Endothelial cell of umbilical vein (primary cell): ENCODE measurements at regions of chr12 and their contacts with region 1.

Region 1: DNA sequence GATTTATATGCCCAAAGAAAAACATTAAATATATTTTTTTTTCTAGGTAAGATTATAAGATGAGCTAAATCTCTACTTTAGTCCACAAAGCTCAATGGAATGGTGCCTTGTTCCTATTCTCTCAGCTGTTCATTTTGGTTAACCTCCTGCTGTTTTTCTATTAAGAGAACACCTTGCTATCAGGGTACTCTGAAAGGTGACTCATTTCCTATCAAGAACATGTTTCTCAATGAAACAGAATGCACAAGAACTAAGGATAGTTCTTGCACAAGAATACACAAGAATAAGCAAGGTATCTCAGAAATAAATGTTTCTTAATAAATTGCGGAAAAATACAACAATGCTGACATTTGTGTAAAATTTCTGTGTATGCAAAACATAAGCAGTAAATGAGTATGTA is 14.1 kb downstream of the ABCD2 start:
- DNase-seq: no peak
- H3K4me3 ChIP-seq: no peak overlapping the region
- H3K27ac ChIP-seq: no peak overlapping the region
- H3K4me1 ChIP-seq: peaks cover 5% of the 10 kb centered on the region
- H3K27me3 ChIP-seq: no peaks in the 10 kb centered on the region
- CTCF ChIP-seq: no peak
- POLR2A ChIP-seq: no peak

Region 2: GRCh38 chr12:39574785-39575492 is 30.6 kb before region 1 on chr12:
- CTCF ChIA-PET with region 1: no interaction called
- POLR2A ChIA-PET with region 1: no interaction called
- dilution Hi-C with region 1: no loop called
- intact Hi-C with region 1: no loop called
- DNase-seq: no peak
- H3K4me3 ChIP-seq: no peak overlapping the region
- H3K27ac ChIP-seq: no peak overlapping the region
- H3K4me1 ChIP-seq: no peaks in the 10 kb centered on the region
- H3K27me3 ChIP-seq: no peaks in the 10 kb centered on the region
- CTCF ChIP-seq: no peak
- POLR2A ChIP-seq: no peak

Region 3: DNA sequence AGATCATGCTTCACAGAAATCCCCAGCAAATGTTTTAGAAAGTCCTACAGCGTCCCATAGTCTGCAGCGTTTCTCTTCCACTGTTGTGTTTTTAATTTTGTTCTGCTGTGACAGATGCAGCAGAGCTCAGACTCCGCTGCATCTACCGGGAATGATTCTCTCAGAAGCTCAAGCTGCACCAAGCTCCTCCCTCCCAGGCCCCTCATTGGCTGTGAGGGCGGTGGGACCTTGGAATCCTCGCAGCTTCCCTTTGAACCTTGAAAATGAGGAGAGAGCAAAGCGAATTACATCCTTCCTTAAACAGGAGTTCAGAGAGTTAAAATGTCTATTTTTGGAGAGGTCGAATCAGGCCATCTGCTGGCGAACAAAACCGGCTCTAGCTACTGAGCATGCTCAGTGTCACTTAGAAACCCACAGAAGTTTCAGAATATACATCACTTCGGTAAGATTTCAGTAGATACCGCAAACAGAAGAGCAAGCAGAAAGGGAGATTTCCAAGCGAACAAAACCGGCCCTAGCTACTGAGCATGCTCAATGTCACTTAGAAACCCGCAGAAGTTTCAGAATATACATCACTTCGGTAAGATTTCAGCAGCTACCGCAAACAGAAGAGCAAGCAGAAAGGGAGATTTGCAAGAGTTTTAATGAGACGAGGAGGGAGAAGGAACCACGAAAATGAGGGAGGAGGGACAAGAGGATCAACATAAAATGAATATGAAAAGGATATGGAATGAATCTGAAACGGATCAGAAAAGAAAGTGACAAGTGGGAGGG is 14.3 kb after region 1 on chr12 and contains the start of gene ABCD2:
- CTCF ChIA-PET with region 1: interaction called, 15 read pairs
- POLR2A ChIA-PET with region 1: no interaction called
- dilution Hi-C with region 1: no loop called
- intact Hi-C with region 1: no loop called
- DNase-seq: peak; percentile 76
- H3K4me3 ChIP-seq: peak within 1 kb of the TSS; percentile 38 to 58 (median 40)
- H3K27ac ChIP-seq: no peak within 1 kb of the TSS
- H3K4me1 ChIP-seq: peaks cover 3% of the 10 kb centered on the region
- H3K27me3 ChIP-seq: peaks cover 10 to 15% of the 10 kb centered on the region in 2 experiments
- CTCF ChIP-seq: no peak
- POLR2A ChIP-seq: no peak
- total RNA-seq, gene ABCD2: not detected in 2 replicates